Ascending aorta (tissue), 2 donors: ENCODE measurements at regions of chr3 and their contacts with region 1.

Region 1: DNA sequence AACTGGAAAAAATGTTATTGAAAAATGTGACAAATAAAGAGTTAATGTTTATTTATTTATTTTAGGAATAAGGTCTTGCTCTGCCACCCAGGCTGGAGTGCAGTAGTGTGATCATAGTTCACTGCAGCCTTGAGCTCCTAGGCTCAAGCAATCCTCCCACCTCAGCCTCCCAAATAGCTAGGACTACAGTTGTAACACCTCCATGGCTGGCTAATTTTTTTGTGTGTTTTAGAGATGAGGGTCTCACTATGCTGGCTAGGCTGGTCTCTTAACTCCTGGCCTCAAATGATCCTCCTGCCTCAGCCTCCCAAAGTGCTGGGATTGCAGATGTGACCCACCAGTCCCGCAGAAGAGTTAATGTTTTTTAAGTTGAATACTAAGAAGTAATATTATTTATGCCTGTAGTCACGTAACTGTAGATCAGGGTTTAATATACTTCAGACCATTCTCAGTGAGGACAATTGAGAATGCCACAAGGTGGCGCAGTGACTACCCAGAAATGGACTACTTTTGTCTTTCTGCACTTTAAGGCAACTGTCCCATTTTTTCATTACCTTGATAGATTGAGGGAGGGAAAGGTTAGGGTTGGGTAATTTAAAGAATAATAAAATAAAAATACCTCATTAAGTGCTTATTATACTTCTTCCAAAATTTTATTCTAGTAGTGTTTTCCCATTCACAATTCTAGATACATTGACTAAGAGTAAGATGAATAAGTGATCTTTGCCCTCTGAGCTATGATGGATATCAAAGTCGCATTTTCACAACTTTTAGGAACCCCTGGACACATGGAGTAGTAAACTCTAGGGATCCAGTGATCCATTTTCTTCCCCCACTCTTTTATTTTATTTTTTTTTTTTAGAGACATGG is 6.0 kb downstream of the MUC13 start:
- DNase-seq: peak in 1 of 2 donors; percentile 82
- H3K4me3 ChIP-seq: no peak overlapping the region
- H3K27ac ChIP-seq: no peak overlapping the region
- H3K4me1 ChIP-seq: no peaks in the 10 kb centered on the region
- H3K27me3 ChIP-seq: no peaks in the 10 kb centered on the region
- CTCF ChIP-seq: peak; percentile 64 to 71 (median 66)

Region 2: GRCh38 chr3:125165189-125165947 is 236.8 kb after region 1 on chr3:
- intact Hi-C with region 1: loop called (anchors 2 kb)
- DNase-seq: peak in 1 of 2 donors; percentile 74
- H3K4me3 ChIP-seq: no peak overlapping the region
- H3K27ac ChIP-seq: no peak overlapping the region
- H3K4me1 ChIP-seq: no peaks in the 10 kb centered on the region
- H3K27me3 ChIP-seq: no peaks in the 10 kb centered on the region
- CTCF ChIP-seq: peak; percentile 35 to 62 (median 50)

Region 3: DNA sequence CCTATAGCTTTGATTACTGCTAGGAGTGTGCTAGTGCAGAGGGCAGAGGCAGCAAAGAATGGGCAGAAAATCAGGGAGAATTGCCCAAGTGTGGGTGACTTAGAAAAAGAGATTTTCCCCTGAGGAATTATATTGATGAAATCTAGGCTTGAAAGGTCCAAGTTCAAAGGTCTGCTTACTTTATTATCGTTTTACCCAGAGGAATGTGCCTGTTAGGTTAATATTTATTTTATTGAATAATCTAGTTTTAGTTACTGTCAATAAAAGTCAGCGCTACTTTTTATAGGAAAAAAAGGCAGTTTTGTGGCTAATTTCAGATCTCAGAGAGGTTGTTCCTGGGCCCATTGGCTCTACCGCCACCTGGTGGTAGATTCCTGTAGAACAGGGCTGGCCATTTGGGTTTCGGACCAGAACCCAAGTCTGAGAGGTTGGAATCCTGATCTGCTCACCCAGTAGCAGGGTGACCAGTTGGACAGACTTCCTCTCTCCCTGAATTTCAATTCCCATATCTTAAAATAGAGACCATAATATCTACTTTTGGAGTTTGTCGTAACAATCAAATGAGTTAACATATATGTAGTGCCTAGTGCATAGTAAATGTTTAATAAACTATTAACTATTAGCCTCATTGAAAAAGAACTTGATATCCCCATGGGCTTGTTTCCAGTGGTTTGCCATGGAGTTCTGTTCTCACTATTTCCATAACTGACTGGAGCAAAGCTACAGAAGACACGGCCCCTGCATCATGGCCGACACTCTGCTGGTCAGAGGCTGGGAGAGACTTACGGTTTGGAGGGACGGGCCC is 509.3 kb after region 1 on chr3:
- intact Hi-C with region 1: loop called (anchors 2 kb)
- DNase-seq: peak in 1 of 2 donors; percentile 78
- H3K4me3 ChIP-seq: no peak overlapping the region
- H3K27ac ChIP-seq: no peak overlapping the region
- H3K4me1 ChIP-seq: peaks cover 0 to 3% of the 10 kb centered on the region in 2 donors
- H3K27me3 ChIP-seq: no peaks in the 10 kb centered on the region
- CTCF ChIP-seq: peak; percentile 73 to 96 (median 95)

Region 4: GRCh38 chr3:125585595-125586223 is 657.1 kb after region 1 on chr3:
- intact Hi-C with region 1: loop called (anchors 5 kb)
- DNase-seq: peak in 1 of 2 donors; percentile 70
- H3K4me3 ChIP-seq: no peak overlapping the region
- H3K27ac ChIP-seq: no peak overlapping the region
- H3K4me1 ChIP-seq: peaks cover 0 to 3% of the 10 kb centered on the region in 2 donors
- H3K27me3 ChIP-seq: no peaks in the 10 kb centered on the region
- CTCF ChIP-seq: peak; percentile 71 to 89 (median 78)